ENCODE measurements at regions of chr19 and their contacts with region 1.

Region 1: GRCh38 chr19:15810335-15810734 is 5.1 kb downstream of the OR10H1 start:
- DNase-seq: peak in 1 of 2 experiments; percentile 12
- H3K4me3 ChIP-seq: no peak overlapping the region
- H3K4me3 Mint-ChIP-seq: no peak overlapping the region
- H3K27ac Mint-ChIP-seq: no peak overlapping the region
- H3K4me1 ChIP-seq: 0 out of 2 replicates have a peak, but pooled peaks cover 4% of the 10 kb centered on the region
- H3K4me1 Mint-ChIP-seq: no peaks in the 10 kb centered on the region
- H3K27me3 ChIP-seq: no peaks in the 10 kb centered on the region
- H3K27me3 Mint-ChIP-seq: peaks cover 7% of the 10 kb centered on the region
- CTCF ChIP-seq: peak; percentile 40 to 66

Region 2: GRCh38 chr19:15629003-15629880 is 181.1 kb before region 1 on chr19:
- CTCF ChIA-PET with region 1: no interaction called
- POLR2A ChIA-PET with region 1: no interaction called
- intact Hi-C with region 1: loop called (anchors 1 kb)
- DNase-seq: peak; percentile 69 to 87
- H3K4me3 ChIP-seq: 0 out of 2 replicates have a peak overlapping the region, but pooled peaks have one; percentile 10
- H3K4me3 Mint-ChIP-seq: no peak overlapping the region
- H3K27ac Mint-ChIP-seq: no peak overlapping the region
- H3K4me1 ChIP-seq: no peaks in the 10 kb centered on the region
- H3K4me1 Mint-ChIP-seq: no peaks in the 10 kb centered on the region
- H3K27me3 ChIP-seq: no peaks in the 10 kb centered on the region
- H3K27me3 Mint-ChIP-seq: no peaks in the 10 kb centered on the region
- CTCF ChIP-seq: peak; percentile 90 to 94

Region 3: DNA sequence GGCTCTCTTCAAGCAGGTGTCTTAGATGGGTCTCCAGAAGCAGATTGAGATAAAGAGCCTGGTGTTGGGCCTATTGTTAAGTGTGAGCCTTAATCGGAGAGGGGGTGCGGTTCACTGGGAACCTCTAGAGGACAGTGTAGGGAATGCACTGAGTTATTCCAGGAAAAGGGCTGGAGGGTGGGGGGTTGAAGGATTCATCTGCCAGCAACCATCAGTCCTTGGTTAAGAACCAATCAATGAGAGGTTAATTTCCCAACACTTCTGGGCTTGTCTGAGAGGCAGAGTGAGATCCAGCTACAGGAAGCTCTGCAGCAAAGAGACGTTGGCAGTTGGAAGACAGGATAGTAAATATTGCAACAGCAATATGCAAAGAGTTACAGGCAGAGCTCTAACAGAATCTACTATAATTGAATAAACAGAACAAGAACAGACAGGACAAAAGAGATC is 58.8 kb after region 1 on chr19:
- CTCF ChIA-PET with region 1: interaction called, 3 read pairs
- POLR2A ChIA-PET with region 1: no interaction called
- intact Hi-C with region 1: loop called (anchors 1 kb)
- DNase-seq: peak; percentile 45 to 54
- H3K4me3 ChIP-seq: no peak overlapping the region
- H3K4me3 Mint-ChIP-seq: no peak overlapping the region
- H3K27ac Mint-ChIP-seq: no peak overlapping the region
- H3K4me1 ChIP-seq: no peaks in the 10 kb centered on the region
- H3K4me1 Mint-ChIP-seq: no peaks in the 10 kb centered on the region
- H3K27me3 ChIP-seq: no peaks in the 10 kb centered on the region
- H3K27me3 Mint-ChIP-seq: peaks cover 4% of the 10 kb centered on the region
- CTCF ChIP-seq: peak; percentile 69 to 79

Region 4: GRCh38 chr19:16041299-16041990 is 231.1 kb after region 1 on chr19:
- CTCF ChIA-PET with region 1: no interaction called
- POLR2A ChIA-PET with region 1: no interaction called
- intact Hi-C with region 1: loop called (anchors 5 kb)
- DNase-seq: peak; percentile 71 to 89
- H3K4me3 ChIP-seq: no peak overlapping the region; the same call in 1 of the 2 replicates
- H3K4me3 Mint-ChIP-seq: peak overlapping the region; percentile 50
- H3K27ac Mint-ChIP-seq: no peak overlapping the region
- H3K4me1 ChIP-seq: no peaks in the 10 kb centered on the region; the same call in 1 of the 2 replicates
- H3K4me1 Mint-ChIP-seq: no peaks in the 10 kb centered on the region
- H3K27me3 ChIP-seq: no peaks in the 10 kb centered on the region
- H3K27me3 Mint-ChIP-seq: no peaks in the 10 kb centered on the region
- CTCF ChIP-seq: peak; percentile 88 to 96